ENCODE measurements at regions of chr15 and their contacts with region 1.

Region 1: DNA sequence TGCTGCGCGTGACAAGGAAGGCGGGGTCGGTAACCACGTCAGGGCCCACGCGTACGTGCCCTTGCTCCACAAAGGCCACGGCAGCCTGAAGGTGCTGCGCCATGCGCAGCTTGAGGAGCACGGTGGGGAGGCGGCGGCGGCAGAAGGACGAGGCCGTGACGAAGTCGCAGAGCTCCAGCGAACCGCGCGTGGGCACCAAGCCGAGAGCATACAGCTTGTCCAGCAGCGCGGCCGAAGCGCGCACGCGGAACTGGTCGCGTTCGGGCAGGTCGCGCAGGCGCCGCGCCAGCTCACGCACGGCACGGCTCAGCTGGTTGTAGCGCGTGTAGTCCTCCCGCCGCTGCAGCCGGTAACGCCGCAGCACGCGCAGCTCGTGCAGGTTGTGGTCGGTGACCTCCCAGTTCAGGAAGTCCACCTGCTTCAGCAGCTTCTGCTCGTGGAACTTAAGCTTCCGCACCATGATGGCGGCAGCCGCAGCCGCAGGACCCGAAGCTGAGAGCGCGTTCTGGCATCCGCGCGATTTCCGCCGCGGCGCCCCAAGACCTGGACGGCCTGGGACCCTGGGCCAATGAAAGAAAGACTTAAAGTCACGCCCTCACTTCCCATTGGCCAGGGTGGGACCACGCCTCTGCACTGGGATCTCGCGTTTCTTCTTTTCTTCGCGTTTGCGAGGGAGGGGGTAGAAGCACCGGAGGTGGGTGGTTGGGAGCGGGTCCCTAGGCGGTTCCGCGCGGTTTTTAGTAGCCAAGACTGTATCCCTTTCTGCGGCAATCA is at the start of gene IMP3:
- DNase-seq: peak; percentile 98
- ATAC-seq: peak; percentile 95
- H3K4me3 Mint-ChIP-seq: peak within 1 kb of the TSS; percentile 88
- H3K27ac Mint-ChIP-seq: peak within 1 kb of the TSS; percentile 95
- H3K4me1 Mint-ChIP-seq: peaks cover 34% of the 10 kb centered on the region
- H3K27me3 Mint-ChIP-seq: no peaks in the 10 kb centered on the region
- total RNA-seq, gene IMP3: 97.9 to 99.1 TPM

Region 2: DNA sequence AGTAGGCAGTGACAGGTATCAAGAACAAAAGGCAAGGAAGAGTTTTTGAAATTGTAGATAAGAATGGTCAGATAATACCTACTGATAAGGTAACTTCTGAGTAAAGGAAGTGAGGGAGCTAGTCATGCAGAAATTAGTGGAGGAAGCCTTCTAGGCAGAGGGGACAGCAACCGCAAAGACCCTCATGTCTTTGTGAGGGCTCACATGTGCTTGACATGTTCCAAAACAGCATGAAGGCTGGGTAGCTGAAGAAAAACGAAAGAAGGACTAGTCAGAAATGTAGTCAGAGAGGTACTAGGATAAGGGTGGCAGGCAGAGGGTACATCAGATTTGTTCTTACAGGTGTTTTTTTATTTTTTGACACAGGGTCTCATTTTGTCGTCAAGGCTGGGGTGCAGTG is 193.7 kb before region 1 on chr15:
- CTCF ChIA-PET with region 1: interaction called, 48 read pairs
- POLR2A ChIA-PET with region 1: interaction called, 102 read pairs
- DNase-seq: peak; percentile 32
- ATAC-seq: no peak
- H3K4me3 Mint-ChIP-seq: peak overlapping the region; percentile 52
- H3K27ac Mint-ChIP-seq: peak overlapping the region; percentile 86
- H3K4me1 Mint-ChIP-seq: peaks cover 56% of the 10 kb centered on the region
- H3K27me3 Mint-ChIP-seq: no peaks in the 10 kb centered on the region

Region 3: GRCh38 chr15:75508840-75509532 is 130.9 kb before region 1 on chr15:
- CTCF ChIA-PET with region 1: interaction called, 30 read pairs
- POLR2A ChIA-PET with region 1: interaction called, 4 read pairs
- DNase-seq: peak; percentile 47
- ATAC-seq: peak; percentile 42
- H3K4me3 Mint-ChIP-seq: no peak overlapping the region
- H3K27ac Mint-ChIP-seq: peak overlapping the region; percentile 8
- H3K4me1 Mint-ChIP-seq: no peaks in the 10 kb centered on the region
- H3K27me3 Mint-ChIP-seq: no peaks in the 10 kb centered on the region

Region 4: GRCh38 chr15:75578948-75579920 is 60.7 kb before region 1 on chr15 and contains the start of gene PTPN9:
- CTCF ChIA-PET with region 1: interaction called, 30 read pairs
- POLR2A ChIA-PET with region 1: interaction called, 30 read pairs
- DNase-seq: peak; percentile 84
- ATAC-seq: peak; percentile 83
- H3K4me3 Mint-ChIP-seq: peak within 1 kb of the TSS; percentile 92
- H3K27ac Mint-ChIP-seq: peak within 1 kb of the TSS; percentile 94
- H3K4me1 Mint-ChIP-seq: peaks cover 18% of the 10 kb centered on the region
- H3K27me3 Mint-ChIP-seq: no peaks in the 10 kb centered on the region
- total RNA-seq, gene PTPN9: 46.3 to 48.7 TPM

Region 5: GRCh38 chr15:75606711-75607699 is 32.9 kb before region 1 on chr15:
- CTCF ChIA-PET with region 1: interaction called, 12 read pairs
- POLR2A ChIA-PET with region 1: interaction called, 11 read pairs
- DNase-seq: peak; percentile 74
- ATAC-seq: peak; percentile 80
- H3K4me3 Mint-ChIP-seq: peak overlapping the region; percentile 63
- H3K27ac Mint-ChIP-seq: peak overlapping the region; percentile 96
- H3K4me1 Mint-ChIP-seq: peaks cover 50% of the 10 kb centered on the region
- H3K27me3 Mint-ChIP-seq: no peaks in the 10 kb centered on the region

Region 6: GRCh38 chr15:75625542-75626347 is 14.2 kb before region 1 on chr15 and contains the start of gene SNUPN:
- CTCF ChIA-PET with region 1: interaction called, 16 read pairs
- POLR2A ChIA-PET with region 1: interaction called, 118 read pairs
- DNase-seq: peak; percentile 97
- ATAC-seq: peak; percentile 89
- H3K4me3 Mint-ChIP-seq: peak within 1 kb of the TSS; percentile 97
- H3K27ac Mint-ChIP-seq: peak within 1 kb of the TSS; percentile 99
- H3K4me1 Mint-ChIP-seq: peaks cover 44% of the 10 kb centered on the region
- H3K27me3 Mint-ChIP-seq: no peaks in the 10 kb centered on the region
- total RNA-seq, gene SNUPN: 31.4 to 32.5 TPM

Region 7: GRCh38 chr15:75705853-75706681 is 66.2 kb after region 1 on chr15:
- CTCF ChIA-PET with region 1: no interaction called
- POLR2A ChIA-PET with region 1: no interaction called
- DNase-seq: no peak
- ATAC-seq: no peak
- H3K4me3 Mint-ChIP-seq: no peak overlapping the region
- H3K27ac Mint-ChIP-seq: no peak overlapping the region
- H3K4me1 Mint-ChIP-seq: no peaks in the 10 kb centered on the region
- H3K27me3 Mint-ChIP-seq: no peaks in the 10 kb centered on the region

Measured in activated CD8-positive, alpha-beta T cell treated with anti-CD3 and anti-CD28 coated beads, Interleukin-2, amount 10 ng/mL, durations not matched to agents 7 days and 5 days (primary cell).